CD8-positive, alpha-beta T cell (primary cell): ENCODE measurements at regions of chr14 and their contacts with region 1.

Region 1: GRCh38 chr14:94363151-94363624 is 25.2 kb downstream of the SERPINA1 start:
- DNase-seq: no peak
- ATAC-seq: no peak
- H3K4me3 ChIP-seq: no peak overlapping the region
- H3K4me3 Mint-ChIP-seq: no peak overlapping the region
- H3K27ac ChIP-seq: no peak overlapping the region
- H3K27ac Mint-ChIP-seq: no peak overlapping the region
- H3K4me1 ChIP-seq: no peaks in the 10 kb centered on the region
- H3K4me1 Mint-ChIP-seq: no peaks in the 10 kb centered on the region
- H3K27me3 ChIP-seq: no peaks in the 10 kb centered on the region
- H3K27me3 Mint-ChIP-seq: peaks cover 19% of the 10 kb centered on the region
- CTCF ChIP-seq: no peak

Region 2: GRCh38 chr14:94380225-94381148 is 17.3 kb after region 1 on chr14:
- CTCF ChIA-PET with region 1: no interaction called
- POLR2A ChIA-PET with region 1: no interaction called
- intact Hi-C with region 1: loop called in 1 of 2 experiments (anchors 1 kb)
- DNase-seq: no peak
- ATAC-seq: no peak
- H3K4me3 ChIP-seq: no peak overlapping the region
- H3K4me3 Mint-ChIP-seq: no peak overlapping the region
- H3K27ac ChIP-seq: no peak overlapping the region
- H3K27ac Mint-ChIP-seq: no peak overlapping the region
- H3K4me1 ChIP-seq: no peaks in the 10 kb centered on the region
- H3K4me1 Mint-ChIP-seq: no peaks in the 10 kb centered on the region
- H3K27me3 ChIP-seq: no peaks in the 10 kb centered on the region
- H3K27me3 Mint-ChIP-seq: peaks cover 9% of the 10 kb centered on the region
- CTCF ChIP-seq: no peak